ENCODE measurements at regions of chr2 and their contacts with region 1.

Region 1: GRCh38 chr2:99337113-99338028 is at the start of gene EIF5B:
- DNase-seq: peak; percentile 96 to 97
- H3K4me3 ChIP-seq: peak within 1 kb of the TSS; percentile 94
- H3K4me3 Mint-ChIP-seq: no peak within 1 kb of the TSS
- H3K27ac Mint-ChIP-seq: no peak within 1 kb of the TSS
- H3K4me1 ChIP-seq: peaks cover 24% of the 10 kb centered on the region
- H3K4me1 Mint-ChIP-seq: no peaks in the 10 kb centered on the region
- H3K27me3 ChIP-seq: no peaks in the 10 kb centered on the region
- H3K27me3 Mint-ChIP-seq: no peaks in the 10 kb centered on the region
- CTCF ChIP-seq: peak; percentile 54 to 80
- total RNA-seq, gene EIF5B: 71.5 and 79.5 TPM in 2 replicates

Region 2: GRCh38 chr2:99085421-99085820 is 251.9 kb before region 1 on chr2:
- CTCF ChIA-PET with region 1: no interaction called
- POLR2A ChIA-PET with region 1: no interaction called
- intact Hi-C with region 1: loop called (anchors 10 kb)
- DNase-seq: peak in 1 of 2 experiments; percentile 14
- H3K4me3 ChIP-seq: no peak overlapping the region
- H3K4me3 Mint-ChIP-seq: no peak overlapping the region
- H3K27ac Mint-ChIP-seq: no peak overlapping the region
- H3K4me1 ChIP-seq: no peaks in the 10 kb centered on the region
- H3K4me1 Mint-ChIP-seq: no peaks in the 10 kb centered on the region
- H3K27me3 ChIP-seq: no peaks in the 10 kb centered on the region
- H3K27me3 Mint-ChIP-seq: peaks cover 6% of the 10 kb centered on the region
- CTCF ChIP-seq: peak; percentile 35 to 60

Region 3: DNA sequence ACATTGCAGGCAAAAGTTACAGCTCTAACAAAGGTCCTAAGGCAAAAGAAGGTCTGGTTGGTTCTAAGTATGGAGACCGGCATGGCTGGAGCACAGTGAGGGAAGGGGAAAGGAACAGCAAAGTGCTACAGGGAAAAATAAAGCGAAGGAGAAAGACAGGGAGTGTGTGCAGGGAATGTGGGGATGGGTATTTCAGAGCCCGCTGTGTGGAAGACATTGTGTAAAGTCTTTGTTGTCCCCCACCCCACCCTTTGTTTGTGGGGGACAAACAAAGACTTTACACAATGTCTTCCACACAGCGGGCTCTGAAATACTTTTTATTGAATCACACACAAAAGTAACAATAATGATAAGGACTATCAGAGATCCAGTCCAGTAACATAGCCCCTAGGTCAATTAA is 224.8 kb before region 1 on chr2:
- CTCF ChIA-PET with region 1: no interaction called
- POLR2A ChIA-PET with region 1: no interaction called
- intact Hi-C with region 1: no loop called
- DNase-seq: no peak
- H3K4me3 ChIP-seq: no peak overlapping the region
- H3K4me3 Mint-ChIP-seq: no peak overlapping the region
- H3K27ac Mint-ChIP-seq: no peak overlapping the region
- H3K4me1 ChIP-seq: no peaks in the 10 kb centered on the region
- H3K4me1 Mint-ChIP-seq: peaks cover 8% of the 10 kb centered on the region
- H3K27me3 ChIP-seq: no peaks in the 10 kb centered on the region
- H3K27me3 Mint-ChIP-seq: no peaks in the 10 kb centered on the region
- CTCF ChIP-seq: no peak

Region 4: DNA sequence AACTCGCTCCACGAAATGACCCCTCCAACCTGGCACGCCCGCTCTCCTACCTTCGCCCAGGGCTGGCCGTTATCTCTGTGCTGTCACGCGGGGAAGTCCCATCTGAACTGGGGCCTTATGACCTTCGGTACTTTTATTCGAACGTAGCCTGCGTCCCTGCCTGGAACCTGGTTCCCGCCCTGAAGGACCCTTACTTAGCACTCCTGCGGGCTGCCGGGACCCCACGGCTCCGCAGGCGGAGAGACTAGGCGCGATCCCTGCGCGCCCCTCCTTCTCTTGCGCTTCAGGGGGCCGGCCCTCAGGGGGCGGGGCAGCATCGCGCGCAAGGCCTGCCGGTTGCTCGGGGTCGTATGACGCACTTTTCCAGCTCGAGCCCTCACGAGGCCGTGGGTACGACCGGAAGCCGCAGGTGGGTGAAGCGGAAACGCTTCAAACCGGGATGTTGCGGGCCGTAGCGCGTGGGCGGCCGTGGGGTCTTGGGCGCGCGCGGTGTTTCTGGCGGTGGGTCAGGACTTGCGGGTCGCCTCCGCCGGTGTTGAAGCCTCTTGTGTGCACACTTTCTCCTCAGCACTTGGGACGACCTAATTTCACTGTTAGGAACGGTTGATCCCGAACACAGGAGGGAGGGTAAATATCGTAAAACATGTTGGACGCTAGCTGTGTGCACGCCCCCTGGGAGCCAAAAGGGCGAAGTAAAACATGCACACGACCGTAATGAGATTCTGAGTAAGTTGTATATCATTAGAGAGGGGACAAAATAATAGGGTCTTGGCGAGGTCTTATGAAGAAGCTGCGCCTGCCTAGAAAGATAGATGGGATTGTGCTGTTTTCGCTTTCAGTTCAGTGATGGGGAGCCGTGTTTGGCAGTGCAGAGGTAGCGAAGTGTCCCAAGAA is 182.5 kb before region 1 on chr2 and contains the starts of genes LIPT1 and TSGA10:
- CTCF ChIA-PET with region 1: no interaction called
- POLR2A ChIA-PET with region 1: interaction called, 4 read pairs
- intact Hi-C with region 1: loop called (anchors 1 kb)
- DNase-seq: peak; percentile 92 to 93
- H3K4me3 ChIP-seq: peak within 1 kb of the TSS; percentile 86
- H3K4me3 Mint-ChIP-seq: no peak within 1 kb of the TSS
- H3K27ac Mint-ChIP-seq: peak within 1 kb of the TSS; percentile 87
- H3K4me1 ChIP-seq: no peaks in the 10 kb centered on the region; the same call in 1 of the 2 replicates
- H3K4me1 Mint-ChIP-seq: peaks cover 7% of the 10 kb centered on the region
- H3K27me3 ChIP-seq: no peaks in the 10 kb centered on the region
- H3K27me3 Mint-ChIP-seq: no peaks in the 10 kb centered on the region
- CTCF ChIP-seq: peak in 1 of 2 experiments; percentile 34
- total RNA-seq, gene LIPT1: 9.4 and 10.2 TPM in 2 replicates
- total RNA-seq, gene TSGA10: 8.9 and 9.9 TPM in 2 replicates

Region 5: DNA sequence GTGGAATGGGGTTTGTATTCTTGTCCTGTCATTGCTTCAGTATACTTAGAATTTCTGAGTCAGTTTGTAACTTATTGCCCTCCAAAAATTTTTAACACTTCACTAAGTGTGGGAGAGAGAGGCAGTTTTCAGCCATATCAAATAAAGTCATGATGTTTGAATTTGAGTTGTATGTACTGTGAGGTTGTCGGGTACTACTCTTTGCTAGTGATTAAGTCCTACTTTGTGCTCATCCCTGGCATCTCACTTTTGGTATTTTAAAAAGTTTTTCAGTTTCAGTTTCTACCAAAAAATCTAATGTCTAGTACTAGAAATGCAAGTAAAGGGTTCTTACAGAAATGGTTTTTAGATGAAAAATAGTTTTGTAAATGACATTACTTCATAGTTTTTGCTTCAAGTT is 40.5 kb after region 1 on chr2:
- CTCF ChIA-PET with region 1: no interaction called
- POLR2A ChIA-PET with region 1: interaction called, 13 read pairs
- intact Hi-C with region 1: no loop called
- DNase-seq: no peak
- H3K4me3 ChIP-seq: no peak overlapping the region
- H3K4me3 Mint-ChIP-seq: no peak overlapping the region
- H3K27ac Mint-ChIP-seq: no peak overlapping the region
- H3K4me1 ChIP-seq: no peaks in the 10 kb centered on the region; the same call in 1 of the 2 replicates
- H3K4me1 Mint-ChIP-seq: no peaks in the 10 kb centered on the region
- H3K27me3 ChIP-seq: no peaks in the 10 kb centered on the region
- H3K27me3 Mint-ChIP-seq: no peaks in the 10 kb centered on the region
- CTCF ChIP-seq: no peak

Region 6: GRCh38 chr2:99448556-99448955 is 111.2 kb after region 1 on chr2:
- CTCF ChIA-PET with region 1: no interaction called
- POLR2A ChIA-PET with region 1: no interaction called
- intact Hi-C with region 1: no loop called
- DNase-seq: no peak
- H3K4me3 ChIP-seq: no peak overlapping the region
- H3K4me3 Mint-ChIP-seq: no peak overlapping the region
- H3K27ac Mint-ChIP-seq: no peak overlapping the region
- H3K4me1 ChIP-seq: no peaks in the 10 kb centered on the region
- H3K4me1 Mint-ChIP-seq: no peaks in the 10 kb centered on the region
- H3K27me3 ChIP-seq: no peaks in the 10 kb centered on the region
- H3K27me3 Mint-ChIP-seq: no peaks in the 10 kb centered on the region
- CTCF ChIP-seq: no peak

Region 7: DNA sequence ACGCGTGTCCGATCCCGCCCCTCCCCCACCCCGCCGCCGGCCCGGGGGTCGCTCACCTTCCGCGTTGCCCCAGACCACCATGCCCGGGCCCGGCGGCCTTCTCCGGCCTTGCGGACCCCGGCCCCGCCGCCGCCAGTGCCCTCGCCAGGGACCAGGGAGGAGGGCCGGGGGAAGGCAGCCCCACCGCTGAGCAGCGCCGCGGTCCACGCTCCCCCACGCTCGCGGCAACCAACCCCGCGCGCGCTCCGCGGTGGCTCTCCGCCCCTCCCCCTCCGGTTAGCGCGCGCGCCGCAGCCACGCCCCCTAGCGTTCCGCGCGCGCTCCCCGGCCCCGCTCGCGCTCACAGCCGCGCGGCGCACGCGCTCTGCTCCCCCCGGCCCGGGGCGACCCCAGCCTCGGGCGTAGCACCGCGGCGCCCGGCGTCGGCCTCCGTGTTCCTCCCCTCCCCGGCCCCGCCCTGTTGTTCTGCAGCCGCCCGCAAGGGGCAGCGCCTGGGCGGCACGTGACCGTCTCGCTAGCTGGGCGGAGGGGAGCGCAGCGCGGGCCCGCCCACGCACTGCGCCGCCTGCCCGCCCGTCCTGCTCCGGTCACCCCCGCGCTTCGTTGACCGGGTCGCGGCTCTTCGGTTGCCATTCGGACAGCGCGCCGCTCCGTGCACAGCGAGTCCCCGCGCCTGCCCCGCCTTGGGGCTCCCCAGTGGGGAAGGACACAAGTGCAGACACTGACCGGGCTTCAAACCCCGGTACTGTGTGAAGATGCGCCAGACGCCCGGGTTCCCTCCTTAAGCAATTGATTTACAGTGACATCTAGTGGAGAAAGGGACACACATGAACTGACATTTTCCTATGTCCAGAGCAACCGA is 152.6 kb after region 1 on chr2 and contains the start of gene REV1:
- CTCF ChIA-PET with region 1: no interaction called
- POLR2A ChIA-PET with region 1: no interaction called
- intact Hi-C with region 1: loop called (anchors 1 kb)
- DNase-seq: peak; percentile 94 to 97
- H3K4me3 ChIP-seq: peak within 1 kb of the TSS; percentile 87
- H3K4me3 Mint-ChIP-seq: peak within 1 kb of the TSS; percentile 100
- H3K27ac Mint-ChIP-seq: peak within 1 kb of the TSS; percentile 99
- H3K4me1 ChIP-seq: peaks cover 5% of the 10 kb centered on the region; the same call in 1 of the 2 replicates
- H3K4me1 Mint-ChIP-seq: peaks cover 7% of the 10 kb centered on the region
- H3K27me3 ChIP-seq: no peaks in the 10 kb centered on the region
- H3K27me3 Mint-ChIP-seq: no peaks in the 10 kb centered on the region
- CTCF ChIP-seq: peak; percentile 65 to 83
- total RNA-seq, gene REV1: 39.6 and 41.1 TPM in 2 replicates